A673 (cell line): ENCODE measurements at regions of chr11 and their contacts with region 1.

Region 1: DNA sequence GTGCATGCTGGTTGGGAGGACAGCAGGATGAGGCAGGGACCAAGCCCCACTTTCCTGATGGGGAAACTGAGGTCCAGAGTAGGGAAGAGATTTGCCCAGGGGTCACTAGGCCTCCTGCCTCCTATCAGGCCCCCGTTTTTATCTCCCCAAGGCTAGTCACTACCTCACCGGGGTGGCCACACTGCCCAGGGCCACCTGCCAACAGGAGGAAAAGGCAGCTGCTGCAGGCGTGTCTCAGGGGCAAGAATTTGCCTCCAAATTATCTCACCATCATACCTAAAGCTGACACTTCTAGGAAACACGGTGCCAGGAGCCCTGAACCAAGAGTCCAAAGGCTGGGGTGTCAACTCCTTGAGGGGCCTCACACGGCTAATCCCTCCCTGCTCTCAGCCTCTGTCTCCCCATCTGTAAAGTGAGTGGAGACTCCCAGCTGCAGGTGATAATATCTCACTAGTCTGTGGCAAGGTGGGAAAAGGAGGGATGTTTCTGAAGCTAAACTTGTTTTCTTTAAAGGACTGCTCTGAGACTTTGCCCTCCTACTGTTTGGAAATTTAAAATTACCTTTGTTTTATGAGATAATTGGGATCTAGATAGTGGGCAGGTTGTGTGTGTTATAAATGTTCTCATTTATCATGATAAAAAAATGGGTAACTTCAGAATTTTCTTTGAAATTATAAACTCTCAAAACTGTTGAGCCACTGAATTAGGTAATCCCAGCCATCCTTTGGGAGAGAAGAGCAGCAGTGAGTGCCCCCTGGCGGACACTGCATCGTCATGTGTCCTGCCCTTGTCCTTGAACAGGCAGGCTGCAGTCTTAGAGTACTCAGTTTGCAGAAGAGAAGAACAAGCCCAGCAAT is 60.0 kb downstream of the MYO7A start:
- DNase-seq: peak; percentile 82
- H3K4me3 ChIP-seq: no peak overlapping the region
- H3K27ac ChIP-seq: no peak overlapping the region
- H3K4me1 ChIP-seq: no peaks in the 10 kb centered on the region
- H3K27me3 ChIP-seq: no peaks in the 10 kb centered on the region
- CTCF ChIP-seq: peak; percentile 98

Region 2: DNA sequence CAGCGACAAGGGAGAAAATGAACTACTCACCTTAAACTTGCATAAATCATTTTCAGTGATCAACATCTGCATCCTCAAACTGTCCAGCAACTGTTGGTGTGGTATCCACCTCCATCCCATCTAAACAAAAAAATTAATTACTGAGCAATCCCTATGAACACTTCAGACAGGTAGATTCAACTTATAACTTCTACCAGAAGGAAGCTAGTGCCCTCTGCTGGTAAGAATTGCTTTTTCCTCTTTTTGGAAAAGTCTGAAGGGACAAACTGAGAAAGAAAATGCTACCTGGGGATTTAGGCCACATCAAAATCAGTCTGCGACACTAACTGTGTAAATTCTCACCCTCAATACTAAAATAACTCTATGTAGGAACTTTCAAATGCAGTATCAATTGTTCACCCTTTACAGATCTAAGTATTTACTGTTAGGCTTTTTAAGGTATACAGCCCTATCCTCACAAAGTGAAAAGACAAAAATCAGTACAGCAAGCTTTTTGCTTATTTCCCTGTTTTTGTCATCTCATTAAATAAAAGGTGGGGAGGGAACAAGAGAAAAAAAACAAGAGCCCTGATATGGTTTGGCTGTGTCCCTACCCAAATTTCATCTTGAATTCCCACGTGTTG is 431.7 kb after region 1 on chr11:
- CTCF ChIA-PET with region 1: no interaction called
- POLR2A ChIA-PET with region 1: no interaction called
- intact Hi-C with region 1: loop called (anchors 2 kb)
- DNase-seq: peak; percentile 55
- H3K4me3 ChIP-seq: no peak overlapping the region
- H3K27ac ChIP-seq: no peak overlapping the region
- H3K4me1 ChIP-seq: no peaks in the 10 kb centered on the region
- H3K27me3 ChIP-seq: no peaks in the 10 kb centered on the region
- CTCF ChIP-seq: peak; percentile 86

Region 3: GRCh38 chr11:77981346-77981947 is 793.4 kb after region 1 on chr11:
- CTCF ChIA-PET with region 1: no interaction called
- POLR2A ChIA-PET with region 1: no interaction called
- intact Hi-C with region 1: no loop called
- DNase-seq: no peak
- H3K4me3 ChIP-seq: no peak overlapping the region
- H3K27ac ChIP-seq: no peak overlapping the region
- H3K4me1 ChIP-seq: no peaks in the 10 kb centered on the region
- H3K27me3 ChIP-seq: no peaks in the 10 kb centered on the region
- CTCF ChIP-seq: no peak